H1 (cell line): ENCODE measurements at regions of chr12 and their contacts with region 1.

Region 1: DNA sequence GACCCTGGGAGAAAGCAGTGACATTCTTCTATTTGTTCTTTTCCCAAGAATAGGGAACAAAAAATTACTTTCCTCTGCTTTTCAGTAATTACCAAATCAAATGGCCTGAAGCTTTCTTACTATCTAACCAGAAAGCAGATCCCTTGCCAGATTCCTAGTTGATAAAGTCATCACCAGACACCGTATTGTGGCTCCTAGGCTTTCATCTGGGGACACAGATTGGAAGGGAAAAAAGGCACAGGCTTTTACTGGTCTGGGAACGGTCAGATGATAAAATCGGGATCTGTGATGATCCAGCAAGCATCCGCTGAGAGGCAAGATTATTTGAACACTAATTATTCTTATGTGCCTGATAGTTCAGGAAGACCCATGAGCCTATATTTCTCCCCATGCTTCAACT is 79.1 kb upstream of the BCL2L14 start:
- DNase-seq: no peak
- H3K4me3 ChIP-seq: no peak overlapping the region
- H3K27ac ChIP-seq: no peak overlapping the region
- H3K4me1 ChIP-seq: no peaks in the 10 kb centered on the region
- H3K27me3 ChIP-seq: no peaks in the 10 kb centered on the region
- CTCF ChIP-seq: no peak
- EP300 ChIP-seq: no peak
- POLR2A ChIP-seq: no peak
- RAD21 ChIP-seq: no peak

Region 2: DNA sequence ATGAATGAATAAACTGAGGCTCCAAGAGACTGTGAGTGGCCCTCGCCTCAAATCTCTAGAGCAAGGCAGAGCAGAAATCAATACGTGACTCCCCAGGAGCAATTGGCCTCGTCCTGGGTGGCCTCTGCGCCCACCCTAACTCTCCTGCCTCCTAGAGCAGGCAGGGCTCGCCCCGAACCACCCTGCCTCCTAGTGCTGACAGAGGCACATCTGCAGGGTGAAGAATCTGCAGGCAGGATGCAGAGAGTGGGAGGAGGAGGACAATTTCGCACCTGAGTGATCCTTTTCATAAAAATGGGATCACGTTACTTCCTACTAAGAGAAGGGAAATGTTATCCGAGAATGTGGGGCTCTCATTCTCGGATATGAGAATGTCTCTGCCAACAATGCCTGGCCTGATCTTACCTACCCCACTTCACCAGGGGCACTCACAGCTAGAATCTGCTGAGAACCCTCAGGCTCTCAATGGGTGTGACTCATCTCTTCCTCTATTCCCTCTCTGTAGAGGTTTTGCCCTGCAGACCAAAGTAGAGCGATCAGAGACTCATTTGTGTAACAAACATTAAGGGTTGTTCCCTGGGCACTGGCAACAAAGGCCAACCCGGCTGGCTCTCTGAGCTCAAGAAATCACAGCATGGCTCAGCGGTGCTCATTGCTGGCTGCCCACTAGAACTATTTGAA is 17.5 kb after region 1 on chr12:
- CTCF ChIA-PET with region 1: interaction called, 12 read pairs
- POLR2A ChIA-PET with region 1: no interaction called
- DNase-seq: peak; percentile 64 to 78
- H3K4me3 ChIP-seq: peak overlapping the region in 2 of 4 experiments; percentile 5 to 7; a peak in 2 of 8 replicates
- H3K27ac ChIP-seq: peak overlapping the region; percentile 44; the same call in 1 of the 2 replicates
- H3K4me1 ChIP-seq: peaks cover 14 to 22% (median 19%) of the 10 kb centered on the region in 4 experiments
- H3K27me3 ChIP-seq: no peaks in the 10 kb centered on the region
- CTCF ChIP-seq: peak; percentile 36 to 58 (median 56)
- EP300 ChIP-seq: peak in 1 of 2 experiments; percentile 66; a peak in 1 of 3 replicates
- POLR2A ChIP-seq: no peak
- RAD21 ChIP-seq: peak; percentile 42 to 57; a peak in 3 of 4 replicates